Transverse colon (tissue), 4 donors: ENCODE measurements at regions of chr12 and their contacts with region 1.

Region 1: GRCh38 chr12:122013791-122014590 is 7.7 kb upstream of the BCL7A start:
- DNase-seq: no peak
- H3K4me3 ChIP-seq: no peak overlapping the region
- H3K27ac ChIP-seq: no peak overlapping the region
- H3K4me1 ChIP-seq: no peaks in the 10 kb centered on the region
- H3K27me3 ChIP-seq: no peaks in the 10 kb centered on the region
- CTCF ChIP-seq: no peak
- EP300 ChIP-seq: no peak
- POLR2A ChIP-seq: no peak

Region 2: GRCh38 chr12:121175383-121176227 is 838.4 kb before region 1 on chr12:
- in situ Hi-C with region 1: no loop called
- intact Hi-C with region 1: loop called (anchors 5 kb)
- DNase-seq: no peak
- H3K4me3 ChIP-seq: no peak overlapping the region
- H3K27ac ChIP-seq: no peak overlapping the region
- H3K4me1 ChIP-seq: peaks cover 0 to 6% (median 0%) of the 10 kb centered on the region in 4 donors
- H3K27me3 ChIP-seq: no peaks in the 10 kb centered on the region
- CTCF ChIP-seq: no peak
- EP300 ChIP-seq: no peak
- POLR2A ChIP-seq: no peak

Region 3: DNA sequence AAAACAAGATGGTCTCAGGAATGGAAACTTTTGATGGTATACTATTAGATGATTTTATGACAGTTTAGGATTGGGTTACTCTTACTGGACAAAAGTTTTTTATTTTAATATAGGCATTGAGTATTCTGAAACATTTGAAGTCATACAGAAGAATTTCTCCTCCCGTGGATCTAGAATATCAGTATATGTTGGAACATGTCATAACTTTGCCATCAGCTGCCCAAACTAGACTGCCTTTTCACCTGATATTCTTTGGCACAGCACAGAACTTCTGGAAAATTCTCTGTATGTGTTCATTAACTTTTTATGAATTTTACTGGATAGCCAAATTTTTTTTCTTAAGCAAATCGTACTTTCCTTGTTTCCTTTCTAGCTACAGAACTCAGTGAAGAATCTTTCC is 588.5 kb after region 1 on chr12:
- in situ Hi-C with region 1: no loop called
- intact Hi-C with region 1: no loop called
- DNase-seq: no peak
- H3K4me3 ChIP-seq: no peak overlapping the region
- H3K27ac ChIP-seq: no peak overlapping the region
- H3K4me1 ChIP-seq: no peaks in the 10 kb centered on the region
- H3K27me3 ChIP-seq: no peaks in the 10 kb centered on the region
- CTCF ChIP-seq: no peak
- EP300 ChIP-seq: no peak
- POLR2A ChIP-seq: no peak